CD14-positive monocyte (primary cell): ENCODE measurements at regions of chr5 and their contacts with region 1.

Region 1: GRCh38 chr5:43066799-43067741 is 27.0 kb upstream of the ANXA2R start:
- DNase-seq: peak; percentile 88 to 91 (median 89)
- H3K4me3 ChIP-seq: peak overlapping the region; percentile 79 to 93 (median 85)
- H3K4me3 Mint-ChIP-seq: peak overlapping the region; percentile 94 to 98
- H3K27ac ChIP-seq: peak overlapping the region; percentile 98 to 99
- H3K27ac Mint-ChIP-seq: peak overlapping the region; percentile 97 to 99 (median 99)
- H3K4me1 ChIP-seq: peaks cover 33 to 40% of the 10 kb centered on the region in 2 donors
- H3K4me1 Mint-ChIP-seq: peaks cover 41% of the 10 kb centered on the region
- H3K27me3 ChIP-seq: no peaks in the 10 kb centered on the region
- H3K27me3 Mint-ChIP-seq: no peaks in the 10 kb centered on the region
- CTCF ChIP-seq: no peak

Region 2: DNA sequence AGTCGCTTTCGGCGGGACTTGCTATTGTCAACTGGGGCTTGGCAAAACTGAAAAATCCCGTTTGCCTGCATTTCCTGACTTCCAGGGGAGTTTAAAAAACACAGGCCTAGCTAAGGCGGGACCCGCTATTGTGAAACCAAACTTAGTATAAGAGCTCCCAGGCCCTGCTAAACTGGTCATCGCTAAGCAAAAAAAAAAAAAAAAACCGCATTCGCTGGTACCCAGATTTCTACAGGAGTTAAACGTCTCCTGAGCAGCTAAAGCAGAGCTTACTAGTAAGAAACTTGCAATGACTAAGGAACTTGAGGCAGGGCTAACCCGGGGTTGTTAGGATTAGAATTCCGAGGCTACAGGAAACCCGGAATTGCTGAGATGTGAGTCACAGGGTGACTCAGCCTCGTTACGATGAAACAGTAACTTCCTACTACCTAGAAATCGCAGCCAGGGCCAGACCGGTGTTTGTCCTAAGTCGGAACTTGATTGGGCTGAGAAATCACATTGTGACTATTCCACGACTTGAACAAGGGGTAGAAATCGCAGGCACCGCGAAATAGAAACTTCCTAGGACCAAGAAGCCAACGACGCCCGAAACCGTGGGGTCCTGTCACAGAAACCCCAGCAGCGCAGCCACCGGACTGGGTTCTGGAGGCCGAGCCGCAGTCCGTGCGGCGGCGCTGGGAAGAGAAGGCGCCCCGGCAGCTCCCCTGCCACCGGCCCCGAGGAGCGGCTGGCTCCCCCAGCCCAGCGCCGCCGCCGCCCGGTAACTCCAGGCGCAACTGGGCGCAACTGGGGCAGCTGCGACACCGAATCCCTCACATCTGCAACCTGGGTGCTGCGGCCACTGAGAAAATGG is 116.4 kb before region 1 on chr5:
- intact Hi-C with region 1: loop called (anchors 5 kb)
- DNase-seq: peak; percentile 97 to 99 (median 99)
- H3K4me3 ChIP-seq: peak overlapping the region; percentile 66 to 79 (median 67)
- H3K4me3 Mint-ChIP-seq: peak overlapping the region; percentile 91 to 95
- H3K27ac ChIP-seq: peak overlapping the region; percentile 84 to 93
- H3K27ac Mint-ChIP-seq: peak overlapping the region; percentile 91 to 98 (median 96)
- H3K4me1 ChIP-seq: peaks cover 39 to 46% of the 10 kb centered on the region in 2 donors
- H3K4me1 Mint-ChIP-seq: peaks cover 40% of the 10 kb centered on the region
- H3K27me3 ChIP-seq: peaks cover 0 to 29% of the 10 kb centered on the region in 2 donors
- H3K27me3 Mint-ChIP-seq: peaks cover 16 to 36% (median 29%) of the 10 kb centered on the region in 3 donors
- CTCF ChIP-seq: no peak

Region 3: GRCh38 chr5:43019614-43020293 is 47.3 kb before region 1 on chr5:
- intact Hi-C with region 1: loop called in 1 of 2 experiments (anchors 2 kb)
- DNase-seq: peak; percentile 84 to 90 (median 85)
- H3K4me3 ChIP-seq: peak overlapping the region; percentile 75 to 99 (median 80)
- H3K4me3 Mint-ChIP-seq: peak overlapping the region; percentile 95 to 97
- H3K27ac ChIP-seq: peak overlapping the region; percentile 97 to 99
- H3K27ac Mint-ChIP-seq: peak overlapping the region; percentile 96 to 100 (median 99)
- H3K4me1 ChIP-seq: peaks cover 16 to 18% of the 10 kb centered on the region in 2 donors
- H3K4me1 Mint-ChIP-seq: peaks cover 29% of the 10 kb centered on the region
- H3K27me3 ChIP-seq: no peaks in the 10 kb centered on the region
- H3K27me3 Mint-ChIP-seq: peaks cover 0 to 2% (median 0%) of the 10 kb centered on the region in 3 donors
- CTCF ChIP-seq: peak; percentile 62

Region 4: GRCh38 chr5:43120720-43121564 is 53.9 kb after region 1 on chr5 and contains the start of gene ZNF131:
- intact Hi-C with region 1: loop called in 1 of 2 experiments (anchors 5 kb)
- DNase-seq: peak; percentile 95 to 98 (median 96)
- H3K4me3 ChIP-seq: peak within 1 kb of the TSS; percentile 76 to 96 (median 89)
- H3K4me3 Mint-ChIP-seq: peak within 1 kb of the TSS; percentile 94 to 99
- H3K27ac ChIP-seq: peak within 1 kb of the TSS; percentile 95
- H3K27ac Mint-ChIP-seq: peak within 1 kb of the TSS; percentile 96 to 100 (median 98)
- H3K4me1 ChIP-seq: peaks cover 19 to 29% of the 10 kb centered on the region in 2 donors
- H3K4me1 Mint-ChIP-seq: peaks cover 24% of the 10 kb centered on the region
- H3K27me3 ChIP-seq: no peaks in the 10 kb centered on the region
- H3K27me3 Mint-ChIP-seq: peaks cover 0 to 3% (median 0%) of the 10 kb centered on the region in 3 donors
- CTCF ChIP-seq: no peak
- polyA plus RNA-seq, gene ZNF131: 13.4 to 18.8 (median 17.2) TPM

Region 5: GRCh38 chr5:43227655-43228054 is 160.6 kb after region 1 on chr5:
- intact Hi-C with region 1: no loop called
- DNase-seq: no peak
- H3K4me3 ChIP-seq: no peak overlapping the region
- H3K4me3 Mint-ChIP-seq: no peak overlapping the region
- H3K27ac ChIP-seq: no peak overlapping the region
- H3K27ac Mint-ChIP-seq: no peak overlapping the region
- H3K4me1 ChIP-seq: no peaks in the 10 kb centered on the region
- H3K4me1 Mint-ChIP-seq: no peaks in the 10 kb centered on the region
- H3K27me3 ChIP-seq: no peaks in the 10 kb centered on the region
- H3K27me3 Mint-ChIP-seq: peaks cover 0 to 3% (median 0%) of the 10 kb centered on the region in 3 donors
- CTCF ChIP-seq: peak; percentile 44

Region 6: DNA sequence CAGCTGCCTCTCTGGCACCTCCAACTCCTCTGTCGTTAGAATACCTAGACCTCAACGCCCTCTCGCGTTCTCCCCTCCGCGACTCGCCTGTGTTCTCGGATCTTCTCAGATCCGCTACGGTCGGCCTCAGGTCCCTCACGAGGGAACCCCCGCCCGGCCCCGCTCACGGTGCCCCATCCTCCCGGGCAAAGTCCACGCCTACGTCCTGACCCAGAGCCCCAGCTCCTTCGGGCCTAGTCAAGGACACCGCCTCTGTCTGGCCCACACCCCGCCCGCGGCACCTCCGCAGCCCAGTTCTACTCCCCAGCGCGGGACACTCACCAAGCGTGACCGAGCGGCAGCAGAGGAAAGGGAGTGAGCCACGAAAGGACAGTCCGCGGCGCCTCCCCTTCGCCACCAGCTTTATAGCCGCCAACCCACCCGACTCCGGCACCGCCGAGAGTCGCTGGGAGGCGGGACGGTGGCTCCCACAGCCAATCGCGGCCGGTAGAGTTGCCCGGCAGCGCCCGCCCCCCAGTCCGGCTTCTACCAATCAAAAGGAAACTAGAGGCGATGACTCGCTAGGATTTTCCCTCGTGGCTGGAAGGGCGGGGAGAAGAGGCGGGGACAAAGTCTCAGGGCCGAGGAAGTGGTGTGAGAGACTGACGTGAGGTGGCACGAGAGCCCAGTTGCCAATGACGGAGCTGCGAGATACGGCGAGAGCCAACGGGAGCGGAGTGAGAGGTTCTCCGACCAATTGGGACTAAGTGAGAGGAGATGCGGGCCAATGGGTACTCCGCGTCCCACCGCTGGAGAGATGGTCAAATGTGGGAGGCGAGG is 246.2 kb after region 1 on chr5 and contains the start of gene HMGCS1:
- intact Hi-C with region 1: loop called in 1 of 2 experiments (anchors 5 kb)
- DNase-seq: peak; percentile 97 to 99 (median 99)
- H3K4me3 ChIP-seq: peak within 1 kb of the TSS; percentile 50 to 83 (median 82)
- H3K4me3 Mint-ChIP-seq: peak within 1 kb of the TSS; percentile 95 to 98
- H3K27ac ChIP-seq: peak within 1 kb of the TSS; percentile 85 to 91
- H3K27ac Mint-ChIP-seq: peak within 1 kb of the TSS; percentile 93 to 98 (median 97)
- H3K4me1 ChIP-seq: peaks cover 13 to 18% of the 10 kb centered on the region in 2 donors
- H3K4me1 Mint-ChIP-seq: peaks cover 18% of the 10 kb centered on the region
- H3K27me3 ChIP-seq: no peaks in the 10 kb centered on the region
- H3K27me3 Mint-ChIP-seq: peaks cover 1 to 9% (median 3%) of the 10 kb centered on the region in 3 donors
- CTCF ChIP-seq: no peak
- polyA plus RNA-seq, gene HMGCS1: 6.0 to 10.9 (median 7.8) TPM